Activated B cell treated with CpG ODN at 0.5 μM for 24 hours (primary cell): ENCODE measurements at regions of chr12 and their contacts with region 1.

Region 1: GRCh38 chr12:120904197-120904773 is at the start of gene SPPL3:
- DNase-seq: peak; percentile 96
- ATAC-seq: peak; percentile 80
- H3K4me3 Mint-ChIP-seq: peak within 1 kb of the TSS; percentile 97
- H3K27ac Mint-ChIP-seq: peak within 1 kb of the TSS; percentile 91
- H3K4me1 Mint-ChIP-seq: peaks cover 30% of the 10 kb centered on the region
- H3K27me3 Mint-ChIP-seq: no peaks in the 10 kb centered on the region
- CTCF ChIP-seq: no peak
- total RNA-seq, gene SPPL3: 39.9 and 40.3 TPM in 2 replicates

Region 2: GRCh38 chr12:120495723-120496412 is 408.4 kb before region 1 on chr12 and contains the start of gene DYNLL1:
- CTCF ChIA-PET with region 1: no interaction called
- POLR2A ChIA-PET with region 1: no interaction called
- intact Hi-C with region 1: loop called (anchors 1 kb)
- DNase-seq: peak; percentile 99
- ATAC-seq: peak; percentile 96
- H3K4me3 Mint-ChIP-seq: peak within 1 kb of the TSS; percentile 96
- H3K27ac Mint-ChIP-seq: peak within 1 kb of the TSS; percentile 91
- H3K4me1 Mint-ChIP-seq: peaks cover 29% of the 10 kb centered on the region
- H3K27me3 Mint-ChIP-seq: no peaks in the 10 kb centered on the region
- CTCF ChIP-seq: no peak
- total RNA-seq, gene DYNLL1: 159 and 180 TPM in 2 replicates

Region 3: DNA sequence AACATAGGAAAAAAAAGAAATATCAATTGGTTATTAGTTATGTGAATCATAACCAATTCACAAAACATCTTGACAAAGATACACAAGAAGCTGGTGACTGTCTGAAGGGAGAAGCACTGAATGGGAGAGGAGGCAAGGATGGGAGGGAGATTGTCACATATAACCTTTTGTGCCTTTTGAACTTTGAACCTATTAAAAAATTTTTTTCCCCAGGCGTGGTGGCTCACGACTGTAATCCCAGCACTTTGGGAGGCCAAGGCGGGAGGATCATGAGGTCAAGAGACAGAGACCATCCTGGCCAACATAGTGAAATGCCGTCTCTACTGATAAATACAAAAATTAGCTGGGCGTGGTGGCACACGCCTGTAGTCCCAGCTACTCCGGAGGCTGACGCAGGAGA is 395.7 kb before region 1 on chr12:
- CTCF ChIA-PET with region 1: no interaction called
- POLR2A ChIA-PET with region 1: no interaction called
- intact Hi-C with region 1: no loop called
- DNase-seq: no peak
- ATAC-seq: no peak
- H3K4me3 Mint-ChIP-seq: no peak overlapping the region
- H3K27ac Mint-ChIP-seq: no peak overlapping the region
- H3K4me1 Mint-ChIP-seq: no peaks in the 10 kb centered on the region
- H3K27me3 Mint-ChIP-seq: no peaks in the 10 kb centered on the region
- CTCF ChIP-seq: no peak

Region 4: DNA sequence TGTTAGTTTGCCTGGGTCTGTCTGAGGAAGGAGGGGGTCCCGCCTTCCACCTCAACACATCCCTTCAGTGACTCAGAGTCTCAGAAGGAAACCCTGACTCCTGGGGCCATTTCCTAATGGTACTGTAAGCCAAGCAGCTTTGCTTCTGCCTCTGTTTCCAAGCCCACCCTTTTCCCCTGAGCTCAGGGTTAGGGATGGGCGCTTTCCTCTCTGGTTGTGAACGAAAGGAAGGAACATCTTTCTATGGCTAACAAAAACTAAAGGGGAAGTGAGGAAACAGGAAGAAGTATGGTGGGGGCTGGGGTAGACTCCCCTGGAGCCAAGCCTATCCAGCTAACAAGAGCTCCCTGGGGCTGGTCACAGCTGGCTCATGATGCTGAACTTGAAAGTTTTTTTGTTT is 205.6 kb before region 1 on chr12:
- CTCF ChIA-PET with region 1: no interaction called
- POLR2A ChIA-PET with region 1: no interaction called
- intact Hi-C with region 1: no loop called
- DNase-seq: no peak
- ATAC-seq: no peak
- H3K4me3 Mint-ChIP-seq: no peak overlapping the region
- H3K27ac Mint-ChIP-seq: no peak overlapping the region
- H3K4me1 Mint-ChIP-seq: peaks cover 11% of the 10 kb centered on the region
- H3K27me3 Mint-ChIP-seq: no peaks in the 10 kb centered on the region
- CTCF ChIP-seq: no peak

Region 5: DNA sequence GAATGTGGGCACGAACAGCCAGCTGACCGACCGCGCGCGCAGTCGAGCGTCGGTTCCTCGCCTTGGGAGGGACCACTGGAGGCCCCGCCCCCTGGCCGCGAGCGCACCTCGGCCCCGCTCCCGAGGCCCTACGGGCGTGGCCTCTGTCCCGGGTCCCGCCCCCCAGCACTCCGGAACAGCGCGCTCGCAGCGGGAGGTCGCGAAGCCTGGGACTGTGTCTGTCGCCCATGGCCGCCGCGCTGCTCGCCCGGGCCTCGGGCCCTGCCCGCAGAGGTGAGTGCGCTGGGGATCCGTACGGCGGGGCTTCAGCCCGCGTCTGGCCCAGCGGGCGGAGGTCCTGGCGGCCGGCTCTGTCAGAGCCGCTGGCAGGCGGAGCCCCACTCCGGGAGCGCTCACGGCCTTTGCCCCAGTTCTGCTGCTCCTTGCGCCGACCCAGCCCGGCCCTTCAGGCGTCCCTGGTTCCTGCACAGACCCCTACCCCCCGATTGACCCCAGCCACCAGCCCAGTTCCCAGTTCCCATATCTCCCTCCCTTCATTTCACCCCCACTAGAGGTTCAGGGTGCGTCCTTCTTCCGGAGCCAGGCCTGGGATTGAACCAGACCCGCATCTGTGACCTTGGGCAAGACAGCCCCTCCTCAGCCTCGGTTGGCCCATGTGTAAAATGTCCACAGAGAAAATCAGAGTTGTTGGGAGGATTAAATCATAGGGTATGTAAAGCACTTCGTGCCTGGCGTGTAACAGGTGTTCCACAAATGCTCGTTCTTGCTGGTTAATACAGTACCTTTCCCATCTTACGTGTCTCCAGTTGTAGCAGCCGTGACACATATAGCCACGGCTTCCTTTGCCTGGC is 178.4 kb before region 1 on chr12 and contains the start of gene ACADS:
- CTCF ChIA-PET with region 1: no interaction called
- POLR2A ChIA-PET with region 1: no interaction called
- intact Hi-C with region 1: loop called (anchors 2 kb)
- DNase-seq: peak; percentile 92
- ATAC-seq: peak; percentile 99
- H3K4me3 Mint-ChIP-seq: peak within 1 kb of the TSS; percentile 86
- H3K27ac Mint-ChIP-seq: peak within 1 kb of the TSS; percentile 70
- H3K4me1 Mint-ChIP-seq: peaks cover 28% of the 10 kb centered on the region
- H3K27me3 Mint-ChIP-seq: no peaks in the 10 kb centered on the region
- CTCF ChIP-seq: no peak
- total RNA-seq, gene ACADS: 9.4 and 11.1 TPM in 2 replicates

Region 6: DNA sequence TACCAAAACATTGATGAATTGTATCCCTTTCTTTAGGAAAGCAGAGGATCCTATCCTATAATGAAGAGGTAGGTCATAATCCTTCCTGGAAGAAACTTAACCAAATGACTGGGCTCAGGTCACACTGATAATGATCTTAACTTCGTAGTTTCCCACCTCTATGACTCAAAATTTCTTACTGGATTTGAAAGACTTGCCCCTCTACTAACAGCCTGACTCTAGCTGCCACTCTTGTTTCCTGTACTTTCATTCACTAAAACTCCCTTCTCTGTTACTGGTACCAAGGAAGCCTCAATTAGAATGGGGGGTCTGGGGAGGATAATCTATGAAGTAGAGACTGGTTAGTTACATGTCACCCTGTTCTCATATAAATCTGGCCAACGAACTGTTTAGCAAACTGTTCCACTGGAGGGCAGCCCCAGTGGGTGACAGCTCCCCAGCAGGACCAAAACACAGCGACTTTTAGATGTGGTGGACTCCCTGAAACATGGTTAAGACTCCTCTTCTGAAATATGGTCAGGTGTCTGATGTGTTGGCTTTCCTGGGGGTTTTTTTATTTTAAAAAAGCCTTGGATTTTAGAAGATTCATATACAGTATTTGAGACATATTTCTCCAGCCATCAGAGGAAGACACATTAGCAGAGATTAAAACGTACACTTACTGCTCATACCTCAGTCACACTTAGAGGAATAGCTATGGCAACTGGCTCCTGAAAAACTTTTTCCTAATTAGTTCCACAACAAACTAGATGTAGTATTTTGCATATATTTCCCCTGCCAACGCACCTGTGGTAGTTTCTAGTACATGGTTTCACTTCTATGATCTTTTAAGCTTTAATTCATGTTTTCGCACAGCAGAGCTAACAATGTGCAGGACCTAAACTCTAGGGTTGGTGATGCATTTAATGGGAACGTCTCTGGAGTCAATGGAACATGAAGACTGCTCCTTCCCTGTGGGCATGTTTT is 106.3 kb before region 1 on chr12:
- CTCF ChIA-PET with region 1: no interaction called
- POLR2A ChIA-PET with region 1: no interaction called
- intact Hi-C with region 1: no loop called
- DNase-seq: no peak
- ATAC-seq: peak; percentile 53
- H3K4me3 Mint-ChIP-seq: peak overlapping the region; percentile 36
- H3K27ac Mint-ChIP-seq: peak overlapping the region; percentile 27
- H3K4me1 Mint-ChIP-seq: peaks cover 54% of the 10 kb centered on the region
- H3K27me3 Mint-ChIP-seq: no peaks in the 10 kb centered on the region
- CTCF ChIP-seq: no peak

Region 7: GRCh38 chr12:120856980-120857379 is 47.3 kb before region 1 on chr12:
- CTCF ChIA-PET with region 1: interaction called, 6 read pairs
- POLR2A ChIA-PET with region 1: interaction called, 5 read pairs
- intact Hi-C with region 1: loop called (anchors 2 kb)
- DNase-seq: no peak
- ATAC-seq: peak; percentile 50
- H3K4me3 Mint-ChIP-seq: peak overlapping the region; percentile 52
- H3K27ac Mint-ChIP-seq: peak overlapping the region; percentile 55
- H3K4me1 Mint-ChIP-seq: peaks cover 68% of the 10 kb centered on the region
- H3K27me3 Mint-ChIP-seq: no peaks in the 10 kb centered on the region
- CTCF ChIP-seq: no peak

Region 8: GRCh38 chr12:120944645-120945231 is 40.5 kb after region 1 on chr12:
- CTCF ChIA-PET with region 1: no interaction called
- POLR2A ChIA-PET with region 1: no interaction called
- intact Hi-C with region 1: no loop called
- DNase-seq: peak; percentile 36
- ATAC-seq: peak; percentile 47
- H3K4me3 Mint-ChIP-seq: no peak overlapping the region
- H3K27ac Mint-ChIP-seq: no peak overlapping the region
- H3K4me1 Mint-ChIP-seq: no peaks in the 10 kb centered on the region
- H3K27me3 Mint-ChIP-seq: no peaks in the 10 kb centered on the region
- CTCF ChIP-seq: no peak

Region 9: DNA sequence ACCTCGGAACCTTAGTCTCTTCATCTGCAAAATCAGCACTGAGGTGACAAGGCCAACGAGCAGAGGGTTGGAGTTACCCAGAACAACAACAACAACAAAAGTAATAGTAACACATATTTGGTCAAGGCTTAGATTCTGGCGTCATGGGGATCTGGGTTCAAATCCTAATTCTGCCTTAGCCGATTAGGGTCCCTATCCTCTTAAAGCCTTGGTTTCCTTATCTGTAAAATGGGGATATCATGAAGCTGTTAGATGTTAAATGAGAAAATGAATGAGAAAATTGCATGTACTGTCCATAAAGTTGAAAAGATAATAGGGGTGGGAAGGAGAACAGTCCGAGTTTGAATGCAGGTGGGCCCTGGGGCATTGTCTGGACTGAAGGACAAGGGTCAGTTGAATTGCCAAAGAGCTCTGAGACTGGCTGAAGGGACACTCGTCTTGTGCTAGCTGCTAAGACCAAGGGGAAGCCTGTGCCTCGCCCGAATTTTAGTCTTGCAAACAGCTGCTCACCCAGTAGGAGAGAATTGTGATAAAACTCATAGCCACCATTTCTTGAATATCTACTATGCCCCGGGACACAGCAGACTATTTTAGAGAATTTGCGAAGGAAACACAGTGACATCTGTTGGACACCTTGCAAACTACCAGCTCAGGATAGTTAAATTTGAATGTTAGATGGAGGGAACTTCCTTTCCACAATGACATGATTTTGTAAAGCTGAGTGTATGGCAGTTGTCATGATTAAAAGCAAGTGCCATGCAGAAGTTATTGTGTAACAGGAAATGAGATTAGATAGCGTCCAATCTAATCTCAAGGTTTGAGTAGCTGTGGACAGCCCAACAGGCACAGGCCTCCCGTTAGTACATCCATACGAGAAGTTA is 67.3 kb after region 1 on chr12:
- CTCF ChIA-PET with region 1: interaction called, 4 read pairs
- POLR2A ChIA-PET with region 1: interaction called, 4 read pairs
- intact Hi-C with region 1: loop called (anchors 1 kb)
- DNase-seq: no peak
- ATAC-seq: peak; percentile 94
- H3K4me3 Mint-ChIP-seq: no peak overlapping the region
- H3K27ac Mint-ChIP-seq: no peak overlapping the region
- H3K4me1 Mint-ChIP-seq: peaks cover 8% of the 10 kb centered on the region
- H3K27me3 Mint-ChIP-seq: peaks cover 3% of the 10 kb centered on the region
- CTCF ChIP-seq: no peak